Activated T-helper 1 cell treated with anti-CD3 and anti-CD28 coated beads, Interleukin-12 subunit alpha, Interleukin-12 subunit beta, Interleukin-2, Interleukin-4 antibody, amounts not matched to agents 30 ng/mL and 10 ng/mL and 1 ng/mL, durations not matched to agents 14 hours and 24 hours and 36 hours (primary cell): ENCODE measurements at regions of chr2 and their contacts with region 1.

Region 1: DNA sequence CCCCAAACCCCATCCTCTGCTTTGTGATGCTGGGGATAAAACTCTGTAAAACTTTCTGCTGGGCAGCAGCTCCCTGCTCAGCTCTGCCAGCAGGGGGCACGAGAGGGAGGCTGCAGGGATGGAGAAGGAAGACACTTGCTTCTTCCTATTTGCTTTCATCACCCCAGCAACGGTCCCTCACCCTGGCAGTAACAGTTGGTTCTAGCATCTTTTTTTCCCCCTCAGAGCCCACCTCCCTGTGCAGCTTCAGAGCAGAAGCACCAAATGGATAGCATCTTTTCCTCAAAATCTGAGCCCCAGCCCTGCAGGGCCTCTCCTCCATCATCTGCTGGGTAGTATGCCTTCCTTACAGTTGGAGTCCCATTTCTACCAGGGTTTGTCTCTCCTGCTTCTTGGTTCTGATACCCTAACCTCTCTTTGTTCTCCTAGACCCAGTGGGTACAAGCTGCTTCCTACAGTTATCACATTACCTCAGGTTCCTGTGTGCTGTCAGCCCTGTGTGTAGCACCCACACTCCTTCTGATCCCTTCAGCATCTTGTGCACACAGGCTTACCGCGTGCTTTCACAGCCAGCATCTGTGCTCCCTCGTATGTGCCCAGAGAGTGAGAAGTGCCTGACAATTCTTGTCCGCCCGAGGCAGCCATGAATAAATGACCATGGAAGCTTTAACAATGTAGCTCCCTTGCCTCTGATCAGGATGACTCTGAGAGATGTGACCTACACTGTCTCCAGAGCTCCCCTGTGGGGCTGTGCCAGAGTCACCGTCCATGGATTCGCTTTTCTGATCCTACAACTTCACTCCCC is 14.5 kb downstream of the CKAP2L start:
- DNase-seq: peak; percentile 76
- H3K4me3 Mint-ChIP-seq: peak overlapping the region; percentile 29
- H3K27ac Mint-ChIP-seq: peak overlapping the region; percentile 77
- H3K4me1 Mint-ChIP-seq: peaks cover 58% of the 10 kb centered on the region
- H3K27me3 Mint-ChIP-seq: no peaks in the 10 kb centered on the region

Region 2: DNA sequence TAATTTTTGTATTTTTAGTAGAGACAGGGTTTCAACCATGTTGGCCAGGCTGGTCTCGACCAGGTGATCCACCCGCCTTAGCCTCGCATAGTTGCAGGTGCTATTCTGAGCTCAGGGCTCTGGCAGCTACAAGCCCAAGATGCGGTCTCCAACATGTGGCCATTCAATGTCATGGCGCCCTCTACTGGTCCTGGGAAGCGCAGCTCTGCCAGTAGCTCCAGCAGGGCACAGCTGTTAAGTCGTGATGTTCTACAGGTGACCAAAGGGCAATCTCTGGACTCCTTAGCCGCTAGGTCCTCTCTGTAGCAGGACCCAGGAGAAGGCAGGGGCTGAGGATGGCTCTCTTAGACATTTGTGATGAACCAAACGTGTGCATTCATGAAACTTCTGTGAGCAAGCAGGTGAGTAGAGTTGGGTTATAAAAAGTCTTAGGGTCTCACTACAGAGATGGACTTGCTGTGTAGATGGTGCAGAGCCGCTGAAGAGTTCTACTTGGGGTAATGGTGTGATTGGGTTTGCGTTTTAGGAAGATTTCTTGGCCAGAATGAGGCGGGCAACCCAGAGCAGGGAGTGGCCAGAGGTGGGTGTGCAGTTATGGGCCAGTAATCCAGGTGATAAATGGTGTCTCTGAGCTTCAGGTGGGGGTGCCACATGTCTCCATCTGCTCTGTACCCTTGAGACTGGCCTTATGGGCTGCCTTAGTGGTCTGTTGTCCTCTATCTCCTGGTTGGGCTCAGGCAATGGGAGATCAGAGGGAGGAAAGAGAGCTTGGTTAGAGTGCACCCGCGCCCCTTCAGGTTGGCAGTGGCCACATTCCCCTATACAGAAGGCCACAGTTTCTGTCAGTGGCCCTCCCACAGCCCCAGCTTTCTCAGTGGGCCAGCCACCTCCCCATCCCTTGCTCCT is 192.0 kb after region 1 on chr2:
- intact Hi-C with region 1: loop called (anchors 1 kb)
- DNase-seq: peak; percentile 65
- H3K4me3 Mint-ChIP-seq: no peak overlapping the region
- H3K27ac Mint-ChIP-seq: no peak overlapping the region
- H3K4me1 Mint-ChIP-seq: peaks cover 9% of the 10 kb centered on the region
- H3K27me3 Mint-ChIP-seq: peaks cover 38% of the 10 kb centered on the region

Region 3: GRCh38 chr2:112958428-112959108 is 208.6 kb after region 1 on chr2:
- intact Hi-C with region 1: loop called (anchors 1 kb)
- DNase-seq: peak; percentile 24
- H3K4me3 Mint-ChIP-seq: no peak overlapping the region
- H3K27ac Mint-ChIP-seq: no peak overlapping the region
- H3K4me1 Mint-ChIP-seq: no peaks in the 10 kb centered on the region
- H3K27me3 Mint-ChIP-seq: peaks cover 7% of the 10 kb centered on the region

Region 4: GRCh38 chr2:114011713-114012112 is 1261.8 kb after region 1 on chr2:
- intact Hi-C with region 1: no loop called
- DNase-seq: no peak
- H3K4me3 Mint-ChIP-seq: no peak overlapping the region
- H3K27ac Mint-ChIP-seq: no peak overlapping the region
- H3K4me1 Mint-ChIP-seq: no peaks in the 10 kb centered on the region
- H3K27me3 Mint-ChIP-seq: peaks cover 6% of the 10 kb centered on the region